H1 (cell line): ENCODE measurements at regions of chr2 and their contacts with region 1.

Region 1: DNA sequence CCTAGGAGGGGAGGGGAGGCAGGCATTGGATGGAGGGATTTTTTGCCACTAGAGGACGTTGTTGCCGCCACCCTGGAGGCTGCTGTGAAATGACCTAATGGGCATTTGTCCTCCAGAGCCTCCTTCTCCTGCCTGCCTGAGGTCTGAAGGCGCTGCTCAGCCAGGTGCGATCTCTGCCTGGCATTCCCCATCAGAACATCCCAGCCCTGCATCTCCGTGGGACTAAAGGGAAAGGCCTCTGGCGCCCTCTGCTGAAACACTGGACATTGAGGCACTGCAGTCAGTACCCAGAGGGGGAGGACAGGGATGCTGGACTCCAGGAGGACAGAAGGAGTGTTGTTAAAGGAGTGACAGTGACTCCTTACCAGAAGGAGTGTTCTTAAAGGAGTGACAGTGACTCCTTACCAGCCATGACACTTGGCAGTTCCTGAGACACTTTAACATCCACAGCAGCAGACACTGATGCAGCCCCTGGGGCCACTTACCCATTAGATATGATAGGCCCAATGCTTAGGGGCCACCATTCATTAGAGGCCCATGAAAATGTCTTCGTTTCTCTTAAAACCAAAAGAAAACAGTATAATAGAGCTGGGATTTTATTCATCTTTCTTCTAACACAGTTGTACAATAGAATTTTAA is 17.0 kb downstream of the THNSL2 start:
- DNase-seq: peak; percentile 73 to 84
- H3K4me3 ChIP-seq: no peak overlapping the region
- H3K27ac ChIP-seq: no peak overlapping the region
- H3K4me1 ChIP-seq: peaks cover 3 to 5% (median 5%) of the 10 kb centered on the region in 4 experiments; a peak in 6 of 7 replicates
- H3K27me3 ChIP-seq: no peaks in the 10 kb centered on the region
- CTCF ChIP-seq: peak; percentile 84 to 94 (median 86)
- EP300 ChIP-seq: no peak
- POLR2A ChIP-seq: no peak
- RAD21 ChIP-seq: peak; percentile 89 to 90

Region 2: GRCh38 chr2:88091943-88092342 is 95.2 kb before region 1 on chr2:
- CTCF ChIA-PET with region 1: no interaction called
- POLR2A ChIA-PET with region 1: no interaction called
- DNase-seq: no peak
- H3K4me3 ChIP-seq: no peak overlapping the region
- H3K27ac ChIP-seq: no peak overlapping the region
- H3K4me1 ChIP-seq: peaks cover 0 to 4% (median 2%) of the 10 kb centered on the region in 4 experiments; a peak in 4 of 7 replicates
- H3K27me3 ChIP-seq: no peaks in the 10 kb centered on the region
- CTCF ChIP-seq: no peak
- EP300 ChIP-seq: no peak
- POLR2A ChIP-seq: no peak
- RAD21 ChIP-seq: no peak

Region 3: GRCh38 chr2:88136817-88137216 is 50.3 kb before region 1 on chr2:
- CTCF ChIA-PET with region 1: no interaction called
- POLR2A ChIA-PET with region 1: no interaction called
- DNase-seq: no peak
- H3K4me3 ChIP-seq: no peak overlapping the region
- H3K27ac ChIP-seq: no peak overlapping the region
- H3K4me1 ChIP-seq: no peaks in the 10 kb centered on the region
- H3K27me3 ChIP-seq: no peaks in the 10 kb centered on the region
- CTCF ChIP-seq: no peak
- EP300 ChIP-seq: no peak
- POLR2A ChIP-seq: no peak
- RAD21 ChIP-seq: no peak

Region 4: DNA sequence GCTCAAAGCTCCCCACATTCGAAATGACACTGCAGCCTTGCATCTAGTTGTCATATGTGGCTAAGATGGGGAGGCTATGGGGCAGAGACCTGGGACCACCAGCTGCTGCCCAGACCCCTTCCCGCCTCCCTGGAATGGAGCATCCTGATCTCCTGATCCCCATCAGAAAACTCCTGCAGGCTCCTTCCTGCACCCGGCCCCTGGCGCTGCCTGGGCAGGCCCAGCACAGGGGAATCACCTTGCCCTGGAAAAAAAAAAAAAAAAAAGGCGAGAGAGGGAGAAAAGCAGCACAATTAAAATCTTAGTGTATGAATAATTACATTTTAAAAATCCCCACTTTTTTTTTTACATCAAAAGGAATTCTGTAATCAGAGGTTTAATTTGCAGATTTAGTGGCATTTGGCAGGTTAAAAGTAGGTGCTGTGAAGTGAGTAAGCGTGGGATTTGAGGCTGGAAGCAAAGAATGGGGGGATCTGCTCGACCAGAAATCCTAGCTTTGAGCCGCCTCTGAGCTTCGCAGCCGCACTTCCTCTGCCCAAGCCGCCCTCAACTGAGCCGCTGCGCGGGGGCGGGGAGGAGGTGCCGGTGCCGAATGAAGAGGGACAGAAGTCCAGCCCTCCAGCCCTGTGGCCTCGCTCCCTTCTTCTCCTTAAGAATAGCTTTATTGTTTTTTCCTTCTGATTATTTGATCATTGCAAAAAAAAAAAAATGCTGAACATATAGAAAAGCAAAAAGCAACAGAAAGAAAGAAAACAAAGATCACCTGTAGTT is 12.9 kb after region 1 on chr2:
- CTCF ChIA-PET with region 1: interaction called, 39 read pairs
- POLR2A ChIA-PET with region 1: interaction called, 6 read pairs
- DNase-seq: peak in 1 of 2 experiments; percentile 73
- H3K4me3 ChIP-seq: peak overlapping the region in 3 of 4 experiments; percentile 25 to 37 (median 26); a peak in 6 of 8 replicates
- H3K27ac ChIP-seq: no peak overlapping the region
- H3K4me1 ChIP-seq: peaks cover 3 to 16% (median 8%) of the 10 kb centered on the region in 4 experiments; a peak in 6 of 7 replicates
- H3K27me3 ChIP-seq: peaks cover 1 to 12% (median 8%) of the 10 kb centered on the region in 4 experiments
- CTCF ChIP-seq: 0 out of 4 replicates have a peak, but pooled peaks of 1 of the 3 experiments have one; percentile 2
- EP300 ChIP-seq: no peak
- POLR2A ChIP-seq: no peak
- RAD21 ChIP-seq: no peak

Region 5: DNA sequence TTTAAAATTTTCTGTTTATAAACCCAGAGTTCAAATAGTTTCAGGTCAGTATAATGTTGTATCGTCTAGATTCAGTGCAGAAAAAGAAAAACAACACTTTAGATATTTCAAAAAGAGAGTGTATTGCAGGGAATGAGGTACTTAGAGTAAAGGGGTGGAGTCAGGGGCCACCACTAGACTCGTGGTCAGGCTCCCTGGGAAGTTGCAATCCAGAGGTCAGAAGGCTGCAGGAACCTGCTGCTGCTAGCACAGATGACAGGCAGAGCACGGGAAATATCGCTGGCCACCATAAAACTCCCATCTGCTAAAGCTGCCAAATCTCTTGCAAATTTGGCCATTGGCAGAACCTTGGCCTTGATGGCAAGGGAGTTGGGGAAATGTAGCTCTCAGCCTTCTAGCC is 47.6 kb after region 1 on chr2:
- CTCF ChIA-PET with region 1: interaction called, 15 read pairs
- POLR2A ChIA-PET with region 1: no interaction called
- DNase-seq: no peak
- H3K4me3 ChIP-seq: no peak overlapping the region
- H3K27ac ChIP-seq: no peak overlapping the region
- H3K4me1 ChIP-seq: no peaks in the 10 kb centered on the region; a peak in 1 of 7 replicates
- H3K27me3 ChIP-seq: no peaks in the 10 kb centered on the region
- CTCF ChIP-seq: no peak
- EP300 ChIP-seq: no peak
- POLR2A ChIP-seq: no peak
- RAD21 ChIP-seq: no peak

Region 6: GRCh38 chr2:88296247-88296646 is 109.1 kb after region 1 on chr2:
- CTCF ChIA-PET with region 1: interaction called, 11 read pairs
- POLR2A ChIA-PET with region 1: no interaction called
- DNase-seq: no peak
- H3K4me3 ChIP-seq: no peak overlapping the region
- H3K27ac ChIP-seq: no peak overlapping the region
- H3K4me1 ChIP-seq: no peaks in the 10 kb centered on the region
- H3K27me3 ChIP-seq: no peaks in the 10 kb centered on the region
- CTCF ChIP-seq: no peak
- EP300 ChIP-seq: no peak
- POLR2A ChIP-seq: no peak
- RAD21 ChIP-seq: no peak

Region 7: GRCh38 chr2:88350331-88351248 is 163.4 kb after region 1 on chr2:
- CTCF ChIA-PET with region 1: interaction called, 11 read pairs
- POLR2A ChIA-PET with region 1: no interaction called
- DNase-seq: peak in 1 of 2 experiments; percentile 96
- H3K4me3 ChIP-seq: peak overlapping the region; percentile 14 to 52 (median 34)
- H3K27ac ChIP-seq: peak overlapping the region; percentile 78
- H3K4me1 ChIP-seq: peaks cover 3 to 9% (median 7%) of the 10 kb centered on the region in 4 experiments
- H3K27me3 ChIP-seq: peaks cover 0 to 10% (median 2%) of the 10 kb centered on the region in 4 experiments; a peak in 2 of 7 replicates
- CTCF ChIP-seq: peak; percentile 84 to 90 (median 86)
- EP300 ChIP-seq: 0 out of 3 replicates have a peak, but pooled peaks of 1 of the 2 experiments have one; percentile 37
- POLR2A ChIP-seq: peak in 1 of 2 experiments; percentile 92; a peak in 2 of 3 replicates
- RAD21 ChIP-seq: peak; percentile 50 to 64

Region 8: GRCh38 chr2:88471083-88471942 is 284.2 kb after region 1 on chr2:
- CTCF ChIA-PET with region 1: interaction called, 11 read pairs
- POLR2A ChIA-PET with region 1: no interaction called
- DNase-seq: no peak
- H3K4me3 ChIP-seq: peak overlapping the region in 1 of 4 experiments; percentile 23; a peak in 4 of 8 replicates
- H3K27ac ChIP-seq: no peak overlapping the region
- H3K4me1 ChIP-seq: peaks cover 0 to 7% (median 5%) of the 10 kb centered on the region in 4 experiments; a peak in 4 of 7 replicates
- H3K27me3 ChIP-seq: no peaks in the 10 kb centered on the region
- CTCF ChIP-seq: no peak
- EP300 ChIP-seq: no peak
- POLR2A ChIP-seq: no peak
- RAD21 ChIP-seq: no peak

Region 9: GRCh38 chr2:88554189-88554588 is 367.0 kb after region 1 on chr2:
- CTCF ChIA-PET with region 1: interaction called, 70 read pairs
- POLR2A ChIA-PET with region 1: no interaction called
- DNase-seq: no peak
- H3K4me3 ChIP-seq: no peak overlapping the region
- H3K27ac ChIP-seq: no peak overlapping the region
- H3K4me1 ChIP-seq: peaks cover 0 to 5% (median 2%) of the 10 kb centered on the region in 4 experiments; a peak in 4 of 7 replicates
- H3K27me3 ChIP-seq: no peaks in the 10 kb centered on the region
- CTCF ChIP-seq: peak; percentile 56 to 88 (median 80)
- EP300 ChIP-seq: no peak
- POLR2A ChIP-seq: no peak
- RAD21 ChIP-seq: peak; percentile 95 to 97